Endothelial cell of umbilical vein (primary cell): ENCODE measurements at regions of chr4 and their contacts with region 1.

Region 1: GRCh38 chr4:185774845-185775680 is 36.9 kb downstream of the SORBS2 start:
- DNase-seq: peak; percentile 92
- H3K4me3 ChIP-seq: peak overlapping the region; percentile 50 to 88 (median 62)
- H3K27ac ChIP-seq: peak overlapping the region; percentile 91
- H3K4me1 ChIP-seq: peaks cover 46% of the 10 kb centered on the region
- H3K27me3 ChIP-seq: no peaks in the 10 kb centered on the region
- CTCF ChIP-seq: no peak
- POLR2A ChIP-seq: peak; percentile 69

Region 2: DNA sequence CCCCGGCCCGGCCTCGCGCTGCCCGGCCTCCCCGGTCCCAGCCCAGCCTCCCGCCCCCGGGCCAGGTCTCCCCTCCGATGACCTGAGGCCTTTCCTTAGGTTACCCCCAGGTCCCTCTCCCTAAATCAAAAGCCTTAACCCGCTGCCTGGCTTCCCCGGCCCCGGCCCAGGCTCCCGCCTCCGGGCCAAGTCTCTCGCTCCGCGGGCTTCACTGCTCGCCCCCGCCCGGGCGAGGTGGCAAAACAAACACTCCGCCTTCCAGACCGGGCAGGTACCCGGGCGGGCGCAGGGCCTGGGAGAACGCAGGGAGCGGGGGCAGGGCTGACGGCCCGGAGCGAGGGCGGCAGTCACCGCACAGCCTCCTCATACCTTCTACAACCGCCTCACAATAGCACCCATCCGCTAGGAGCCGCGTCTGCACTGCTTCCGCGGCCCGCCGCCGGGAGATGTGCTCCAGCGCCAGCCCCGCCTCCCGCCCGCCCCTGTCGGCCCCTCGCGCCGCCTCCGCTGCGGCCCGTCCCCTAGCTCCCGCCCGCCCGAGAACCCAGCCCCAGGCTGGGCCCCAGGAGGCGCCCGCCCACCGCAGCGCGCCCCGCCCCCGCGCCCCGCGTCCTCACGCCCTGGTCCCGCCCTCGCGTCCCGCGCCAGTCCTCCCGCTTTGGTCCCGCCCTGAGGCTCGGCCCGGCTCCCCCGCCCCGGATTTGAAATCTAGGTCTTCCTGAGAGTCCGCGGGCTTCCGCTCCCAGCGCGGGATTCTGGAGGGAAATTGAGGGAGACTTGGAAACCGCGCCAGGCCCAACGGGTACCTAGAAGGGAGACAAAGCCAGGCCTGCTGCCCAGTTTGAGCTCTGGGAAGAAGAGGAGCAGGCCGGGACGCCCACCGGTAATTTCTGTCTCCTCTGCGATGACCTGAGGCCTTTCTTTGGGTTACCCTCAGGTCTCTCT is 1125.8 kb before region 1 on chr4 and contains the starts of genes CASP3 and PRIMPOL:
- CTCF ChIA-PET with region 1: no interaction called
- POLR2A ChIA-PET with region 1: no interaction called
- dilution Hi-C with region 1: no loop called
- intact Hi-C with region 1: loop called (anchors 2 kb)
- DNase-seq: peak; percentile 97
- H3K4me3 ChIP-seq: peak within 1 kb of the TSS; percentile 49 to 89 (median 78)
- H3K27ac ChIP-seq: peak within 1 kb of the TSS; percentile 96
- H3K4me1 ChIP-seq: peaks cover 44% of the 10 kb centered on the region
- H3K27me3 ChIP-seq: no peaks in the 10 kb centered on the region
- CTCF ChIP-seq: peak in 1 of 2 donors; percentile 37
- POLR2A ChIP-seq: peak; percentile 87
- total RNA-seq, gene CASP3: 54.5 and 66.1 TPM in 2 replicates
- total RNA-seq, gene PRIMPOL: 11.1 and 13.6 TPM in 2 replicates

Region 3: GRCh38 chr4:184662236-184662635 is 1112.8 kb before region 1 on chr4:
- CTCF ChIA-PET with region 1: no interaction called
- POLR2A ChIA-PET with region 1: no interaction called
- dilution Hi-C with region 1: no loop called
- intact Hi-C with region 1: no loop called
- DNase-seq: no peak
- H3K4me3 ChIP-seq: no peak overlapping the region
- H3K27ac ChIP-seq: no peak overlapping the region
- H3K4me1 ChIP-seq: peaks cover 6% of the 10 kb centered on the region
- H3K27me3 ChIP-seq: no peaks in the 10 kb centered on the region
- CTCF ChIP-seq: no peak
- POLR2A ChIP-seq: no peak

Region 4: DNA sequence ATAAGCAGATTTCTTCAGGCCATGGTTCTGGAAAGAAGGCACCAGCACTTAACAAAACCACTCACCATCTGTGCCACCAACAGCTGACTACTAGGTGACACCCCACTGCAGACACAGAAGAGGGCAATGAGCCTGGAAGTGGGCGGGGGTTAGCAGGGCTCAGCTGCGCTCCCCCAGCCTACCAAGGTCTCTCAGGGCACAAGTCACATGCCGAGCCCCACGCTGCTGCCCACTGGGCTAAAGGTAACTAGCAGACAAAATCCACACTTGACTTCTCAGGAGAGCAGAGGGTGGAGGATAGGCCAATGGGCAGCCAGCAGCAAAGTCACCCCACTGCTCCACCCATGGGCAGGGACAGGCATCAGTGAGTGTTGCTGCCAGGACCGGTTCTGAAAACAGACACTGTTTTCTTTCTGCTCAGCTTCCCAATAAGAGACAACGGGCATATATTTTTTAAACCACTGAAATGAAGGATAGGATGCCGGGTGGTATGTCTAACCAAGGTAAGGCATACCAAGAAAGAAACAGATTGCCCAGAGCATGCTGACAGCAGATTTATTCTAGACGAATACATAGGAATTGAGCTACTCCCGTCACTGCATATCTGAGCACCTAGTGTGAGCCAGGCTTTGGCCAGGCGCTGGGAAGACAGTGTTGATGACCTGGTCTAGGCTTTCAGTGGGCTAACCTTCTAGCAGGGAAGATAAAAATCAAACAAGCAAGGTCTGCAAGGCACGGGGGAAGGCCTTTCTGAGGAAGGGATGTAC is 969.4 kb before region 1 on chr4:
- CTCF ChIA-PET with region 1: no interaction called
- POLR2A ChIA-PET with region 1: no interaction called
- dilution Hi-C with region 1: no loop called
- intact Hi-C with region 1: no loop called
- DNase-seq: no peak
- H3K4me3 ChIP-seq: no peak overlapping the region
- H3K27ac ChIP-seq: no peak overlapping the region
- H3K4me1 ChIP-seq: peaks cover 9% of the 10 kb centered on the region
- H3K27me3 ChIP-seq: no peaks in the 10 kb centered on the region
- CTCF ChIP-seq: no peak
- POLR2A ChIP-seq: no peak

Region 5: DNA sequence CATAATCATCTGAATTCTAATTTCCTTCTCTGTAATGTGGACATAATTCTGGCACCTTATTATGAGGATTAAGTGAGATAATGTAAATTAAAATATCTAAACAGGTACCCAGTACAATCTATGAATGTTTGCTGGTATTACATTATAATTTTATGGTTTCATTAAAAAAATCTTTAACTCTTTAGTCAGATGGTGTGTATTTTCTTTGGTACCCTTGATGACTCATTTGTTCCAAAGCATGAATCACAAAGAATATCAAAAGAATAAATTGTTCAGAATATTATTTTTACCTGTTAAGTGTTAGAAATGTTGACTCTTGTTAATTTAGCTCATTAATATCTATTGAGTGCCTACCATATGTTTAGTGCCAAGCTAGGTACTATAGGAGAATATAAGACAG is 491.3 kb before region 1 on chr4:
- CTCF ChIA-PET with region 1: no interaction called
- POLR2A ChIA-PET with region 1: no interaction called
- dilution Hi-C with region 1: no loop called
- intact Hi-C with region 1: no loop called
- DNase-seq: peak; percentile 73
- H3K4me3 ChIP-seq: no peak overlapping the region
- H3K27ac ChIP-seq: no peak overlapping the region
- H3K4me1 ChIP-seq: peaks cover 12% of the 10 kb centered on the region
- H3K27me3 ChIP-seq: no peaks in the 10 kb centered on the region
- CTCF ChIP-seq: no peak
- POLR2A ChIP-seq: no peak

Region 6: GRCh38 chr4:185656467-185656931 is 118.6 kb before region 1 on chr4:
- CTCF ChIA-PET with region 1: interaction called, 9 read pairs
- POLR2A ChIA-PET with region 1: no interaction called
- dilution Hi-C with region 1: no loop called
- intact Hi-C with region 1: loop called (anchors 5 kb)
- DNase-seq: peak; percentile 61
- H3K4me3 ChIP-seq: peak overlapping the region in 1 of 3 experiments; percentile 5
- H3K27ac ChIP-seq: no peak overlapping the region
- H3K4me1 ChIP-seq: peaks cover 4% of the 10 kb centered on the region
- H3K27me3 ChIP-seq: no peaks in the 10 kb centered on the region
- CTCF ChIP-seq: peak; percentile 28 to 43
- POLR2A ChIP-seq: no peak

Region 7: GRCh38 chr4:185721933-185722316 is 53.1 kb before region 1 on chr4:
- CTCF ChIA-PET with region 1: interaction called, 3 read pairs
- POLR2A ChIA-PET with region 1: no interaction called
- dilution Hi-C with region 1: no loop called
- intact Hi-C with region 1: loop called (anchors 2 kb)
- DNase-seq: no peak
- H3K4me3 ChIP-seq: no peak overlapping the region
- H3K27ac ChIP-seq: no peak overlapping the region
- H3K4me1 ChIP-seq: peaks cover 20% of the 10 kb centered on the region
- H3K27me3 ChIP-seq: no peaks in the 10 kb centered on the region
- CTCF ChIP-seq: no peak
- POLR2A ChIP-seq: no peak

Region 8: DNA sequence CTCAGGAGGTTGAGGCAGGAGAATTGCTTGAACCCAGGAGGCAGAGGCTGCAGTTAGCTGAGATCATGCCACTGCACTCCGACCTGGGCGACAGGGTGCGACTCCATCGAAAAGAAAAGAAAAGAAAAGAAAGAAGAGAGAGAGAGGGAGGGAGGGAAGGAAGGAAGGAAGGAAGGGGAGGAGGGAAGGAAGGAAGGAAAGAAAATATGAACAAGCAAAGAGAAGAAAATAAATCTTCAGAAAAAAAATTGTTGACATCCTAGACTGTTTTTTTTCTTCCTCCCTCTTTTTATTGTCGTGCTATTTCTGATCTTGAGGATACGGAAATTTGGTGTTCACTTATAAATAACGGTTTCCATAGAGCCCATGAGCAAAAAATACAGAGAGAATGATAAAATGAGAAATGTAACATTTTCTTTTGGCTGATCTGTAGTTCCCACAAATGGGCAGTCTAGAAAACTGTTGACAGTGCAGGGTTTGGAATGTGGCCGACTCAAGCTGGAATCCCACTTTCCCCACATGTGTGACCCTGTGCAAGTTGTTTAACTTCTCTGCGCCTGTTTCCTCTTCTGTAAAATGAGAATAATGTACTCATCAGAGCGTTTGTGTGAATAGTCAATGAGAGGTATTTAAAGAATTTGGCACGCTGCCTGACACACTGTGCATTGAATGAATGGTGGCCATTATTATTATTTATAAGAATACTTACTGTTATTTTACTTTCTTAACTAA is 17.5 kb after region 1 on chr4:
- CTCF ChIA-PET with region 1: interaction called, 12 read pairs
- POLR2A ChIA-PET with region 1: interaction called, 3 read pairs
- dilution Hi-C with region 1: no loop called
- intact Hi-C with region 1: loop called (anchors 1 kb)
- DNase-seq: peak; percentile 99
- H3K4me3 ChIP-seq: peak overlapping the region in 1 of 3 experiments; percentile 34
- H3K27ac ChIP-seq: peak overlapping the region; percentile 85
- H3K4me1 ChIP-seq: peaks cover 22% of the 10 kb centered on the region
- H3K27me3 ChIP-seq: no peaks in the 10 kb centered on the region
- CTCF ChIP-seq: no peak
- POLR2A ChIP-seq: peak; percentile 46

Region 9: GRCh38 chr4:185912779-185913178 is 137.7 kb after region 1 on chr4:
- CTCF ChIA-PET with region 1: no interaction called
- POLR2A ChIA-PET with region 1: no interaction called
- dilution Hi-C with region 1: no loop called
- intact Hi-C with region 1: loop called (anchors 5 kb)
- DNase-seq: peak; percentile 7
- H3K4me3 ChIP-seq: no peak overlapping the region
- H3K27ac ChIP-seq: no peak overlapping the region
- H3K4me1 ChIP-seq: no peaks in the 10 kb centered on the region
- H3K27me3 ChIP-seq: no peaks in the 10 kb centered on the region
- CTCF ChIP-seq: no peak
- POLR2A ChIP-seq: no peak